Esophagus squamous epithelium (tissue), 5 donors: ENCODE measurements at regions of chr11 and their contacts with region 1.

Region 1: GRCh38 chr11:1763796-1764661 is at the start of gene CTSD:
- DNase-seq: no peak
- H3K4me3 ChIP-seq: peak within 1 kb of the TSS; percentile 63 to 99 (median 87)
- H3K27ac ChIP-seq: peak within 1 kb of the TSS; percentile 87 to 96 (median 94)
- H3K4me1 ChIP-seq: peaks cover 38 to 58% (median 42%) of the 10 kb centered on the region in 3 donors
- H3K27me3 ChIP-seq: no peaks in the 10 kb centered on the region
- CTCF ChIP-seq: no peak
- POLR2A ChIP-seq: peak in 2 of 4 donors; percentile 47 to 87
- total RNA-seq, gene CTSD: 369 to 649 (median 567) TPM

Region 2: DNA sequence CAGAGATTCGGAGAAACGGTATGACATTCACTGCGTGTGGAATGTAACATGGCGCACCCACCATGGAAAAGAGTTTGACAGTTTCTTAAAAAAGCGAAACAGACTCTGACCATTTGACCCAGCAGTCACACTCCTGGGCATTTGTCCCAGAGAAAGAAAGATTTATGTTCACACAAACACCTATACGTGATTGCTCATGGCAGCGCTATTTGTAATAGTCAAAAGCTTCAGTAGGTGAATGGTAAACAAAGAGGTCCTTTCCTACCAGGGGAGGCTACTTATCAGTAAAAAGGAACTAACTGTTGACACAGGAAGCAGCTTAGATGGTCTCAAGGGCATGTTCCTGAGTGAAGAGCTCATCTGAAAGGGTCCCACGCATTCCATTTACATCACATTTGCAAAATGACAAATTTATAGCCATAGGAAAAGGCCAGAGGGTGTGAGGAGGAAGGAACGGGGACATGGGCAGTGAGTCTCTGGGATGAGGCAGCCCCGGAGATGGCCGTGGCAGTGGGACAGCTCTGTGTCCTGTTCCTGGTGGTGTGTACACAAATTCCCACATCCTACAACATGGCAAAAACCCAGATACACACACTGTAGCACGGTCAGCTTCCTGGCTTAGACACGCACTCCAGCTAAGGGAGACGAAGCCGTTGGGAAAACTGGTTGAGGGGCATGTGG is 81.7 kb before region 1 on chr11:
- intact Hi-C with region 1: no loop called
- DNase-seq: no peak
- H3K4me3 ChIP-seq: no peak overlapping the region
- H3K27ac ChIP-seq: no peak overlapping the region
- H3K4me1 ChIP-seq: no peaks in the 10 kb centered on the region
- H3K27me3 ChIP-seq: peaks cover 0 to 55% (median 2%) of the 10 kb centered on the region in 4 donors
- CTCF ChIP-seq: no peak
- POLR2A ChIP-seq: no peak

Region 3: GRCh38 chr11:1706634-1707400 is 57.2 kb before region 1 on chr11:
- intact Hi-C with region 1: no loop called
- DNase-seq: no peak
- H3K4me3 ChIP-seq: no peak overlapping the region
- H3K27ac ChIP-seq: no peak overlapping the region
- H3K4me1 ChIP-seq: peaks cover 4 to 26% (median 8%) of the 10 kb centered on the region in 3 donors
- H3K27me3 ChIP-seq: peaks cover 0 to 27% (median 0%) of the 10 kb centered on the region in 4 donors
- CTCF ChIP-seq: peak in 2 of 6 experiments; percentile 11 to 39
- POLR2A ChIP-seq: no peak

Region 4: GRCh38 chr11:1832211-1832919 is 68.3 kb after region 1 on chr11:
- intact Hi-C with region 1: loop called (anchors 5 kb)
- DNase-seq: no peak
- H3K4me3 ChIP-seq: peak overlapping the region in 3 of 4 donors; percentile 29 to 49 (median 38)
- H3K27ac ChIP-seq: peak overlapping the region; percentile 36 to 94 (median 91)
- H3K4me1 ChIP-seq: peaks cover 30 to 98% (median 47%) of the 10 kb centered on the region in 3 donors
- H3K27me3 ChIP-seq: peaks cover 0 to 32% (median 0%) of the 10 kb centered on the region in 4 donors
- CTCF ChIP-seq: peak; percentile 98 to 99 (median 98)
- POLR2A ChIP-seq: no peak